IMR-90 (cell line): ENCODE measurements at regions of chr11 and their contacts with region 1.

Region 1: GRCh38 chr11:127345819-127346459 is 345.4 kb upstream of the KIRREL3 start:
- DNase-seq: peak; percentile 33
- ATAC-seq: no peak
- H3K4me3 ChIP-seq: no peak overlapping the region
- H3K27ac ChIP-seq: no peak overlapping the region
- H3K4me1 ChIP-seq: no peaks in the 10 kb centered on the region
- H3K27me3 ChIP-seq: no peaks in the 10 kb centered on the region
- CTCF ChIP-seq: peak; percentile 75
- POLR2A ChIP-seq: no peak
- RAD21 ChIP-seq: peak; percentile 62

Region 2: DNA sequence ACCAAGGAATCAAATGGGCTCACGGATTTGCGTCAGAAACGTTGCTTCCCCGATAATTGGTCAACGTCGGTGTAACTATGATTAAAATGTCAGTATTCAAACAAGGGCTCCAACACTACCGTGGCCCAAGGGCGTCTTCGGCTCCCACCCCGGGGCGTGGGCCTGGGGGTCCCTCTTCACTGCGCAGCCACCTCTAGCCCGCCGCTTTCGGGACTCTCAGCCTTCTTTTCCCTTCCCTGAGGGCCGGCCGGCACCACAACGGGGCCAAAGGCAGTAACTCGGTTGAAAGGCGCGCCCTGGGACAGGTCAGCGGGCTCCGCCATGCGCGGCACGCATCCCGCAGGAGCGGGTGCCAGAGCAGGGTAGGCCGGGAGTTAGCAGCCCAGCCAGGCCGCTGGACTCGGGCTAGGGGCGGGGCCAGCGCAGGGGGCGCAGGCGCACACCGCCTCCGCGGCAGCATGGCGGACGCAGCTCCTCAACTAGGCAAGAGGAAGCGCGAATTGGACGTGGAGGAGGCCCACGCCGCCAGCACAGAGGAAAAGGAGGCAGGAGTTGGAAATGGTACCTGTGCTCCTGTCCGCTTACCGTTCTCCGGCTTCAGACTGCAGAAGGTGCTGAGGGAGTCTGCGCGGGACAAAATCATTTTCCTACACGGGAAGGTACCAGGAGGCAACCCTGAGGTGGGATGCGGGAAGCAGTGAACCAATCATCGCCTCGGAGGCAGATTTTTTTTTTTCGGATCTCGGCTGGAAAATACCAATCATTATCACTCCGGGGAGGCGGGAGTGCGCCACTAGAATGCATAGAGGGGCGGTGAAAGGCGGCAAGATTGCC is 1042.1 kb before region 1 on chr11 and contains the start of gene DCPS:
- CTCF ChIA-PET with region 1: no interaction called
- POLR2A ChIA-PET with region 1: no interaction called
- dilution Hi-C with region 1: no loop called
- in situ Hi-C with region 1: loop called (anchors 25 kb)
- intact Hi-C with region 1: no loop called
- DNase-seq: peak; percentile 88
- ATAC-seq: peak; percentile 99
- H3K4me3 ChIP-seq: peak within 1 kb of the TSS; percentile 55
- H3K27ac ChIP-seq: peak within 1 kb of the TSS; percentile 85
- H3K4me1 ChIP-seq: peaks cover 3% of the 10 kb centered on the region; the same call in 1 of the 2 replicates
- H3K27me3 ChIP-seq: no peaks in the 10 kb centered on the region
- CTCF ChIP-seq: no peak
- POLR2A ChIP-seq: peak; percentile 90
- RAD21 ChIP-seq: no peak
- total RNA-seq, gene DCPS: 18.6 and 19.7 TPM in 2 replicates

Region 3: DNA sequence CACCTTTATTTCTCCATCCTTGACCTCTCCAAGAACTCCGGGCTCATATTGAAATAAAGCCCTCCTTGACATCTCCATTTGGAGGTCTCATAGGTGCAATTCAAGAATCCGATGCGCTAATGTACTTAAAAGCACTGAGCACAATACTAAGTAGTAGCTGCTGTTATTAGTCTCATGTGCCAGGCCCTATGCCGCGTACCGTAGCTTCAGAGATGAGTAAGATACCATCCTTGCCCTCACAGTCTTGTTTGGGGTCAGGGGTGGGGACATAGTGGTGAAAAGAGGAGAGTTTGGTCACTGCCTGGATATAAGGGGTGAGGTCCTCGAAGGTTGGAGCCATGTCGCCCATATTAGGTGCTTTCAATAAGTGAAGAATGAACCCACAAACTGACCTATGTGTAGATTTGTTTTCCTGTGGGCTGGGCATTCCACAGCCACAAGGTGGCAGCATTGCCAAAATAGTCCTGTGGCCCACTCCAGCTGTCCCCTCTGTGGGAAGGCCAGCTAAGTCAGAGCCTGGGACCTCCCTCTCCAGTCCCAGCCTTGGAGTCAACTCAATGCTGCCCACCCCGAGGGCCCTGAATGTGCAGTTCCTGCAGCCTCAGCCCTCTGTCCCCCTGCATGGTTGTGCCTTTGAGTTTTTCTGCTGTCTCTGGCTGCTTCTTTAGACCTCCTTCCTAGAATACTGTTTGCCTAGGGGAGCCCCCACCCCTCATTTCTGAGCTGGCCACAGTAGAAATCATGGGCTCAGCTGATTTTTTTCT is 1035.5 kb before region 1 on chr11:
- CTCF ChIA-PET with region 1: no interaction called
- POLR2A ChIA-PET with region 1: no interaction called
- dilution Hi-C with region 1: no loop called
- in situ Hi-C with region 1: loop called (anchors 25 kb)
- intact Hi-C with region 1: loop called (anchors 5 kb)
- DNase-seq: peak; percentile 74
- ATAC-seq: peak; percentile 98
- H3K4me3 ChIP-seq: no peak overlapping the region
- H3K27ac ChIP-seq: no peak overlapping the region
- H3K4me1 ChIP-seq: peaks cover 2% of the 10 kb centered on the region; the same call in 1 of the 2 replicates
- H3K27me3 ChIP-seq: no peaks in the 10 kb centered on the region
- CTCF ChIP-seq: peak; percentile 94
- POLR2A ChIP-seq: peak; percentile 51; the same call in 1 of the 2 replicates
- RAD21 ChIP-seq: peak; percentile 99

Region 4: DNA sequence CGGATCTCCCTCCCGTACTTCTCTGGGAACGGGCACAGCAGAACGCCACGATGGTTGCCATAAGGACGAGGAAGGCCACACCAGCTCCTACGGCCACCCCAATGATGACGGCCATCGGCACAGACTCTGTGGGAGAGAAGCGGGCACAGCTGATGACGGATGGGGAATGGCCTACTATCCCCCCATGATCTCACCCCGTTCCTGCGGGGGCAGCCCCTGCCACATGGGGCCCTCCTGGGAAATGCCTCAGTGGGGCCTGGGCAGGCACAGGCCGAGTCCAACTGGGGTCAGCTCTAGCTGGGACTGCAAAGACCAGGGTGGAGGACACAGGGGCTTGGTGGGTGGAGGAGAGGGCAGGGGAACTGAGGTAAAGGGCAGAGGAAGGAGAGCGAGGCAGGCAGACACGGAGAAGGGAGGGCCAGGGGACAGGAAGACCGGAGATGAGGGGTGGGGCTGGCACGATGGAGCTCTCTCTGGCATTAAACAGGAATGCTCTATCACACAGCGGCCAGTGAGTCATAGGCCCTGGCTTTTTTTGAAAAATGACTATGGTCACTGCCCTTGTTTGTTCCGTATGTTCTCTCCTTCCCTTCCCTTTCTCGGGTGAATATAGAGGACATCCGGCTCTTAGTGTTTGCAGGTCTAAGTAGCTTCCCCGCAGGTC is 914.4 kb before region 1 on chr11:
- CTCF ChIA-PET with region 1: no interaction called
- POLR2A ChIA-PET with region 1: no interaction called
- dilution Hi-C with region 1: no loop called
- in situ Hi-C with region 1: loop called (anchors 5 kb)
- intact Hi-C with region 1: no loop called
- DNase-seq: peak; percentile 72
- ATAC-seq: peak; percentile 87
- H3K4me3 ChIP-seq: no peak overlapping the region
- H3K27ac ChIP-seq: peak overlapping the region; percentile 47
- H3K4me1 ChIP-seq: peaks cover 12% of the 10 kb centered on the region
- H3K27me3 ChIP-seq: no peaks in the 10 kb centered on the region
- CTCF ChIP-seq: no peak
- POLR2A ChIP-seq: no peak
- RAD21 ChIP-seq: no peak

Region 5: GRCh38 chr11:126440792-126441514 is 905.0 kb before region 1 on chr11:
- CTCF ChIA-PET with region 1: interaction called, 3 read pairs
- POLR2A ChIA-PET with region 1: no interaction called
- dilution Hi-C with region 1: no loop called
- in situ Hi-C with region 1: loop called (anchors 5 kb)
- intact Hi-C with region 1: loop called (anchors 1 kb)
- DNase-seq: peak; percentile 59
- ATAC-seq: peak; percentile 96
- H3K4me3 ChIP-seq: no peak overlapping the region
- H3K27ac ChIP-seq: no peak overlapping the region
- H3K4me1 ChIP-seq: no peaks in the 10 kb centered on the region
- H3K27me3 ChIP-seq: no peaks in the 10 kb centered on the region; the same call in 1 of the 2 replicates
- CTCF ChIP-seq: peak; percentile 96
- POLR2A ChIP-seq: no peak
- RAD21 ChIP-seq: peak; percentile 97

Region 6: GRCh38 chr11:126544108-126545056 is 801.6 kb before region 1 on chr11:
- CTCF ChIA-PET with region 1: no interaction called
- POLR2A ChIA-PET with region 1: no interaction called
- dilution Hi-C with region 1: no loop called
- in situ Hi-C with region 1: no loop called
- intact Hi-C with region 1: no loop called
- DNase-seq: peak; percentile 57
- ATAC-seq: peak; percentile 76
- H3K4me3 ChIP-seq: no peak overlapping the region
- H3K27ac ChIP-seq: no peak overlapping the region
- H3K4me1 ChIP-seq: peaks cover 3% of the 10 kb centered on the region
- H3K27me3 ChIP-seq: no peaks in the 10 kb centered on the region
- CTCF ChIP-seq: no peak
- POLR2A ChIP-seq: no peak
- RAD21 ChIP-seq: no peak

Region 7: GRCh38 chr11:126716456-126717083 is 629.4 kb before region 1 on chr11:
- CTCF ChIA-PET with region 1: interaction called, 3 read pairs
- POLR2A ChIA-PET with region 1: no interaction called
- dilution Hi-C with region 1: no loop called
- in situ Hi-C with region 1: loop called (anchors 25 kb)
- intact Hi-C with region 1: loop called (anchors 1 kb)
- DNase-seq: peak; percentile 43
- ATAC-seq: peak; percentile 48
- H3K4me3 ChIP-seq: no peak overlapping the region
- H3K27ac ChIP-seq: no peak overlapping the region
- H3K4me1 ChIP-seq: peaks cover 6% of the 10 kb centered on the region
- H3K27me3 ChIP-seq: no peaks in the 10 kb centered on the region
- CTCF ChIP-seq: peak; percentile 67
- POLR2A ChIP-seq: no peak
- RAD21 ChIP-seq: peak; percentile 76

Region 8: GRCh38 chr11:127017482-127017881 is 328.5 kb before region 1 on chr11:
- CTCF ChIA-PET with region 1: no interaction called
- POLR2A ChIA-PET with region 1: no interaction called
- dilution Hi-C with region 1: no loop called
- in situ Hi-C with region 1: loop called (anchors 10 kb)
- intact Hi-C with region 1: loop called (anchors 1 kb)
- DNase-seq: peak; percentile 93
- ATAC-seq: peak; percentile 100
- H3K4me3 ChIP-seq: no peak overlapping the region
- H3K27ac ChIP-seq: no peak overlapping the region
- H3K4me1 ChIP-seq: peaks cover 2% of the 10 kb centered on the region; the same call in 1 of the 2 replicates
- H3K27me3 ChIP-seq: peaks cover 45% of the 10 kb centered on the region
- CTCF ChIP-seq: peak; percentile 72
- POLR2A ChIP-seq: no peak
- RAD21 ChIP-seq: peak; percentile 69